Breast epithelium (tissue), 4 donors: ENCODE measurements at regions of chr14 and their contacts with region 1.

Region 1: GRCh38 chr14:87409393-87409792 is 583.6 kb downstream of the GALC start:
- DNase-seq: no peak
- H3K4me3 ChIP-seq: no peak overlapping the region
- H3K27ac ChIP-seq: no peak overlapping the region
- H3K4me1 ChIP-seq: no peaks in the 10 kb centered on the region
- H3K27me3 ChIP-seq: no peaks in the 10 kb centered on the region
- CTCF ChIP-seq: no peak
- POLR2A ChIP-seq: no peak

Region 2: DNA sequence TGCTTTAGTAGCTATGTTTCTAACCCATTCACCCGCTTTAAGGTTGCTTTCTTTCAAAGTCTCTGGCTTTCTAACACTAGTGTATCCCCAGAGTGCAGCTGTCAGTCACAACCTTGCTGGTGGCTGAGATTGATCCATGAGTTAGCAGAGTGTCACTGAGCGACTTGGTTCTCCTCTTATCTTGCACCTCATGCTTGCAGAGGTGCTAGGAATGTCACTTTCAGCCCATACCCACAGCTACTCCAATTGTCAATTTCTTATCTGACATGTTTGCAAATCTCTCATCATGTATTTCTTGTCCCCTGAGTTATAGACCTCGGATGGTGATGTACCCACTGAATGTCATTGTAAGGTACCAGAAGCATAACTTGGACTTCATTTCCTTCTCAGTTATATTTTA is 526.6 kb before region 1 on chr14:
- intact Hi-C with region 1: loop called (anchors 10 kb)
- DNase-seq: no peak
- H3K4me3 ChIP-seq: no peak overlapping the region
- H3K27ac ChIP-seq: no peak overlapping the region
- H3K4me1 ChIP-seq: no peaks in the 10 kb centered on the region
- H3K27me3 ChIP-seq: no peaks in the 10 kb centered on the region
- CTCF ChIP-seq: no peak
- POLR2A ChIP-seq: no peak